ENCODE measurements at regions of chr1 and their contacts with region 1.

Region 1: GRCh38 chr1:40531381-40532061 is at the start of gene ZNF684:
- DNase-seq: peak; percentile 89
- ATAC-seq: peak; percentile 97
- H3K4me3 ChIP-seq: peak within 1 kb of the TSS; percentile 71
- H3K27ac ChIP-seq: peak within 1 kb of the TSS; percentile 77
- H3K4me1 ChIP-seq: peaks cover 6% of the 10 kb centered on the region
- H3K27me3 ChIP-seq: no peaks in the 10 kb centered on the region
- CTCF ChIP-seq: no peak
- EP300 ChIP-seq: no peak
- POLR2A ChIP-seq: peak; percentile 80
- RAD21 ChIP-seq: no peak
- polyA plus RNA-seq, gene ZNF684: 5.9 to 6.2 TPM

Region 2: GRCh38 chr1:38964140-38964548 is 1567.4 kb before region 1 on chr1:
- CTCF ChIA-PET with region 1: no interaction called
- POLR2A ChIA-PET with region 1: no interaction called
- RAD21 ChIA-PET with region 1: no interaction called
- SMC1A ChIA-PET with region 1: no interaction called
- in situ Hi-C with region 1: no loop called
- intact Hi-C with region 1: no loop called
- DNase-seq: no peak
- ATAC-seq: peak; percentile 82
- H3K4me3 ChIP-seq: no peak overlapping the region
- H3K27ac ChIP-seq: no peak overlapping the region
- H3K4me1 ChIP-seq: no peaks in the 10 kb centered on the region
- H3K27me3 ChIP-seq: no peaks in the 10 kb centered on the region
- CTCF ChIP-seq: peak; percentile 37 to 44 (median 43); a peak in 4 of 6 replicates
- EP300 ChIP-seq: no peak
- POLR2A ChIP-seq: no peak
- RAD21 ChIP-seq: peak; percentile 33

Region 3: DNA sequence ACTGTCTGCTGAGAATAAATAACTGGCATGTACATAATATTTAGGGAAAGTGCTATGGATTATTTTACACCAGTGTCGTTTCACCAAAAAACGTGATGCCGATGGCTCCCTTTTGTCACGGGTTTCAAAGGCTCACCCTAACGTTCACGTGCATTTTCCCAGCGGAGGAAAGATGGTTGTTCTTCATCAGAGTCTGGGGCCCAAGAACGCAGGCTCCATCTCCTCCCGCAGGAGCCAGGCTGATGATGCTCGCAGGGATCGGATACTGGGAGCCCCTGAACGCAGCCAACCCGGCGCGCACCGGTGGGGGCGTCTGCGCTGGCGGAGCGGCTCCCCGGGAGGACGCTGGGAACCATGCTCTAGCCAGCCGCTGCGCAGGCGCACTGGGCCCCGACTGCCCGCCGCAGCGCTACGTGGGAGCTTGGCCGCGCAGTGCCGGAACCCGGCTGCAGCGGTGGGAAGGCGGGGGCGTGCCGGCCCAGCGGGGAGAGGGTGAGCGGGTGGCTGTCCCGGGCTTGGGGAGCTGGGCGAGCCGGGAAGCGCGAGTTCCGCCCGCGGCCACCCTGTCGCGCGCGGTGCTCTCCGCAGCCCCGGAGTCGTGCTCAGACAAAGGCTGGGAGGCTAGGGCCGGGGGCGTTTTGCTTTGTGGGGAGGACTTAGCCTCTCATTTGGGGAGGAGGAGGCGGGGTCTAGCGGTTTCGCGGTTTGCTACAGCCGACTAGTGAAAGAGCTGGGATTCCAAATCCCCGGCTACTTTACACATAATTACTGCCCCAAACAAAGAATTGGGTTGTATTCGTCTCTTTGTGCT is 81.6 kb before region 1 on chr1 and contains the start of gene ZFP69B:
- CTCF ChIA-PET with region 1: interaction called, 10 read pairs
- POLR2A ChIA-PET with region 1: interaction called, 4 read pairs
- RAD21 ChIA-PET with region 1: interaction called, 10 read pairs
- SMC1A ChIA-PET with region 1: interaction called, 8 read pairs
- in situ Hi-C with region 1: no loop called
- intact Hi-C with region 1: no loop called
- DNase-seq: peak; percentile 69
- ATAC-seq: peak; percentile 91
- H3K4me3 ChIP-seq: peak within 1 kb of the TSS; percentile 63
- H3K27ac ChIP-seq: peak within 1 kb of the TSS; percentile 83
- H3K4me1 ChIP-seq: no peaks in the 10 kb centered on the region
- H3K27me3 ChIP-seq: no peaks in the 10 kb centered on the region
- CTCF ChIP-seq: peak in 2 of 3 experiments; percentile 11 to 17; a peak in 2 of 6 replicates
- EP300 ChIP-seq: no peak
- POLR2A ChIP-seq: peak; percentile 91
- RAD21 ChIP-seq: no peak
- polyA plus RNA-seq, gene ZFP69B: 1.3 to 1.4 TPM

Region 4: GRCh38 chr1:40519517-40519916 is 12.0 kb before region 1 on chr1:
- CTCF ChIA-PET with region 1: interaction called, 10 read pairs
- POLR2A ChIA-PET with region 1: no interaction called
- RAD21 ChIA-PET with region 1: no interaction called
- SMC1A ChIA-PET with region 1: interaction called, 3 read pairs
- in situ Hi-C with region 1: no loop called
- intact Hi-C with region 1: no loop called
- DNase-seq: no peak
- ATAC-seq: no peak
- H3K4me3 ChIP-seq: no peak overlapping the region
- H3K27ac ChIP-seq: no peak overlapping the region
- H3K4me1 ChIP-seq: no peaks in the 10 kb centered on the region
- H3K27me3 ChIP-seq: no peaks in the 10 kb centered on the region
- CTCF ChIP-seq: no peak
- EP300 ChIP-seq: no peak
- POLR2A ChIP-seq: no peak
- RAD21 ChIP-seq: no peak

Region 5: GRCh38 chr1:40668769-40669525 is 137.4 kb after region 1 on chr1:
- CTCF ChIA-PET with region 1: interaction called, 11 read pairs
- POLR2A ChIA-PET with region 1: no interaction called
- RAD21 ChIA-PET with region 1: interaction called, 3 read pairs
- SMC1A ChIA-PET with region 1: interaction called, 3 read pairs
- in situ Hi-C with region 1: no loop called
- intact Hi-C with region 1: no loop called
- DNase-seq: peak; percentile 43
- ATAC-seq: peak; percentile 83
- H3K4me3 ChIP-seq: peak overlapping the region; percentile 59; the same call in 1 of the 2 replicates
- H3K27ac ChIP-seq: no peak overlapping the region
- H3K4me1 ChIP-seq: peaks cover 7% of the 10 kb centered on the region
- H3K27me3 ChIP-seq: no peaks in the 10 kb centered on the region
- CTCF ChIP-seq: peak; percentile 91
- EP300 ChIP-seq: 0 out of 4 replicates have a peak, but pooled peaks of 1 of the 2 experiments have one; percentile 34
- POLR2A ChIP-seq: no peak
- RAD21 ChIP-seq: peak; percentile 73

Region 6: GRCh38 chr1:40849801-40850592 is 318.5 kb after region 1 on chr1:
- CTCF ChIA-PET with region 1: interaction called, 20 read pairs
- POLR2A ChIA-PET with region 1: no interaction called
- RAD21 ChIA-PET with region 1: interaction called, 5 read pairs
- SMC1A ChIA-PET with region 1: interaction called, 5 read pairs
- in situ Hi-C with region 1: no loop called
- intact Hi-C with region 1: loop called (anchors 2 kb)
- DNase-seq: peak; percentile 62
- ATAC-seq: peak; percentile 92
- H3K4me3 ChIP-seq: no peak overlapping the region
- H3K27ac ChIP-seq: no peak overlapping the region
- H3K4me1 ChIP-seq: peaks cover 12% of the 10 kb centered on the region
- H3K27me3 ChIP-seq: no peaks in the 10 kb centered on the region; a peak in 1 of 4 replicates
- CTCF ChIP-seq: peak; percentile 82 to 94 (median 86)
- EP300 ChIP-seq: no peak
- POLR2A ChIP-seq: no peak
- RAD21 ChIP-seq: peak; percentile 91